H1 (cell line): ENCODE measurements at regions of chr5 and their contacts with region 1.

Region 1: DNA sequence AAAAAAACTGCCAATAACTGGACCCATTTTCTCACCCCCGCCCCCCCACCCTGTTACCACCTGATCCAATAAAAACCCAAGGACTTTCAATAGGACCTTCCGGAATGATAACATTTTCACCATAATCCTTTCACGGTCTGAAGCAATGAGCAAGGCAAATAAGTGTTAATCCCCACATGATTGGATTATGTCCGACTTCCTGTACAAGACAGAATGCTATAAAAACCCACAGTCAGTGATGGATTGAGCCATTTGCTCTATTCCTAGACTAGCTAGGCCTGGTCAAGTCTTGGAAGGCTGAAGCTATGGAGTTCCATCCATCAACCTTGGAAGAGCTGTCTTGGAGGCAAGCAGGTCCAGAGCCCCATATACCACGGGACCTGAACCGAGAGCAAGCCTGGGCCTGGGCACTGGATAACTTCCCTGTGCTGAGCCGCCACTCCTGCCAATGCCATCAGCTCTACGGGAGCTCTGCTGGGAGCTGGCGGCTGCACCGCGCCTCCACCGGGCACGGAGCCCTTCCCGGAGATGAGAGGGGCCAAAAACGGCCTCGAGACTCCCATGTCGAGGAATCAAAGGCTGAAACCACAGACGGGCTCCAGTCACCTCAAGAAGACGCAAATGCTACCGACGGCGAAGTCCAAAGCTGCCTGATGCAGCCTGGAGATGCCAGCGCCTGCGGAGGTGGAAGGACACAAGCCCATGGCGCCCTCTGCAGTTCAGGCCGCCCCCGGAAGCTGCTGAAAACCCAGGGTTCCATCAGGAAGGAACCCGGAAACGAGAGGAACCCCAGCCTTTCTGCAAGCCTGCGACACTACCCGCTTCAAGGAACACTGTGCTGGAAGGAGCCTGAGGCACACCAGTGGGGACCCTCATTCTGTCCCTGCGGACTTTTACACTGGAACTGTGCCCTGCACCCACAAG is 69.2 kb downstream of the ANXA2R start:
- DNase-seq: peak in 1 of 2 experiments; percentile 84
- H3K4me3 ChIP-seq: no peak overlapping the region
- H3K27ac ChIP-seq: no peak overlapping the region
- H3K4me1 ChIP-seq: no peaks in the 10 kb centered on the region
- H3K27me3 ChIP-seq: no peaks in the 10 kb centered on the region
- CTCF ChIP-seq: peak; percentile 67 to 81 (median 76)
- EP300 ChIP-seq: no peak
- POLR2A ChIP-seq: no peak
- RAD21 ChIP-seq: peak; percentile 79 to 83

Region 2: GRCh38 chr5:42858031-42858643 is 112.8 kb before region 1 on chr5:
- CTCF ChIA-PET with region 1: no interaction called
- POLR2A ChIA-PET with region 1: no interaction called
- DNase-seq: no peak
- H3K4me3 ChIP-seq: no peak overlapping the region
- H3K27ac ChIP-seq: no peak overlapping the region
- H3K4me1 ChIP-seq: peaks cover 0 to 3% (median 0%) of the 10 kb centered on the region in 4 experiments; a peak in 1 of 7 replicates
- H3K27me3 ChIP-seq: peaks cover 0 to 1% (median 0%) of the 10 kb centered on the region in 4 experiments; a peak in 1 of 7 replicates
- CTCF ChIP-seq: no peak
- EP300 ChIP-seq: no peak
- POLR2A ChIP-seq: no peak
- RAD21 ChIP-seq: no peak

Region 3: DNA sequence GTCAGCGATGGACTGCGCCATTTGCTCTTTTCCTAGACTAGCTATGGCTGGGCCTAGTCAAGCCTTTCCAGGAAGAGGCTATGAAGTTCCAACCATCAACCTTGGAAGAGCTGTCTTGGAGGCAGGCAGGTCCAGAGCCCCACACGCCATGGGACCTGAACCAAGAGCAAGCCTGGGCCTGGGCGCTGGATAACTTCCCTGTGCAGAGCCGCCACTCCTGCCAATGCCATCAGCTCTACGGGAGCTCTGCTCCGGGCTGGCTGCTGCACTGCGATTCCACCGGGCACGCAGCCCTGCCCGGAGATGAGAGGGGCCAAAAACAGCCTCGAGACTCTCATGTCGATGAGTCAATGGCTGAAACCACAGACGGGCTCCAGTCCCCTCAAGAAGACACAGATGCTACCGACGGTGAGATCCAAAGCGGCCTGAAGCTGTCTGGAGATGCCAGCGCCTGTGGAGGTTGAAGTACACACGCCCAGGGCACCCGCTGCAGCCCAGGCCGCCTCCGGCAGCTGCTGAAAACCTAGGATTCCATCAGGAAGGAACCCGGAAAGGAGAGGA is 55.5 kb before region 1 on chr5:
- CTCF ChIA-PET with region 1: interaction called, 60 read pairs
- POLR2A ChIA-PET with region 1: no interaction called
- DNase-seq: no peak
- H3K4me3 ChIP-seq: no peak overlapping the region
- H3K27ac ChIP-seq: no peak overlapping the region
- H3K4me1 ChIP-seq: no peaks in the 10 kb centered on the region
- H3K27me3 ChIP-seq: no peaks in the 10 kb centered on the region
- CTCF ChIP-seq: no peak
- EP300 ChIP-seq: no peak
- POLR2A ChIP-seq: no peak
- RAD21 ChIP-seq: no peak

Region 4: GRCh38 chr5:43040287-43041098 is 69.6 kb after region 1 on chr5 and contains the start of gene ANXA2R:
- CTCF ChIA-PET with region 1: no interaction called
- POLR2A ChIA-PET with region 1: no interaction called
- DNase-seq: peak in 1 of 2 experiments; percentile 88
- H3K4me3 ChIP-seq: peak within 1 kb of the TSS in 2 of 4 experiments; percentile 7 to 57; a peak in 3 of 8 replicates
- H3K27ac ChIP-seq: no peak within 1 kb of the TSS
- H3K4me1 ChIP-seq: peaks cover 9 to 29% (median 14%) of the 10 kb centered on the region in 4 experiments
- H3K27me3 ChIP-seq: peaks cover 76 to 95% (median 91%) of the 10 kb centered on the region in 4 experiments
- CTCF ChIP-seq: peak; percentile 66 to 85 (median 83)
- EP300 ChIP-seq: no peak
- POLR2A ChIP-seq: no peak
- RAD21 ChIP-seq: peak; percentile 60 to 69
- total RNA-seq, gene ANXA2R: 0.17 and 0.29 TPM in 2 replicates

Region 5: DNA sequence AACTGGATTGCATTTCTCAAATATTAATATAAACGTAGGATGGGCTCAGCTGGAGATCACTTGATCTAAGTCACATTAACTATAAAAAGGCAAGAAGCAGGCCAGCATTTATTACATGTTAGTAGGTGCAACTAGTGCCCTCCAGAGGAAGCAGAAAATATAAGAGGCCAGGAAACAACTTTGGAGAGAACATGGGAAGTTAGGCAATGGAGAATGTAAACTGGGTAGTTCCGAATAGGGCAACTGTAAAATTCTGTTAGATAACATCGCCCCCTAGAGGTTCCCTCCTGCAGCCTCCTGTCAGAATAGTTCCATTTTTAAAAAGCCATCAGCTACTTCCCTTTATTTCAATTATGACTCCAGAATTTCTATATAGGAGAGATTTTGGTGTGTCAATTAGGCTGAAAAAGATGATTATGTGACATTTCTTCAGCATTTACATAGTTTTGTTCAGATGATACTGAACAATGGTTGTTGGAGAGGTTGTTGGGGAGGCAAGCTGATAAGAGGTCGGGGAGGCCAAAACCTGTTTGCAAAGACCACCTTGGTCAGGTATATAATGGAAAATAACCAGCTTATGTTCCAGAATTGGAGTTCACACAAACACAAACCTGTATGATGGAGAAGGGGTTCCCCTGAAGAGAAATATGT is 418.9 kb after region 1 on chr5:
- CTCF ChIA-PET with region 1: no interaction called
- POLR2A ChIA-PET with region 1: no interaction called
- DNase-seq: peak; percentile 46 to 50
- H3K4me3 ChIP-seq: no peak overlapping the region
- H3K27ac ChIP-seq: no peak overlapping the region
- H3K4me1 ChIP-seq: no peaks in the 10 kb centered on the region
- H3K27me3 ChIP-seq: peaks cover 0 to 1% (median 0%) of the 10 kb centered on the region in 4 experiments; a peak in 1 of 7 replicates
- CTCF ChIP-seq: peak in 2 of 3 experiments; percentile 82 to 84; a peak in 3 of 4 replicates
- EP300 ChIP-seq: no peak
- POLR2A ChIP-seq: no peak
- RAD21 ChIP-seq: peak; percentile 88 to 91